OCI-LY7 (cell line): ENCODE measurements at regions of chr1 and their contacts with region 1.

Region 1: GRCh38 chr1:24688621-24689195 is 45.6 kb downstream of the SRRM1 start:
- DNase-seq: peak; percentile 74
- H3K4me3 ChIP-seq: no peak overlapping the region
- H3K27ac ChIP-seq: no peak overlapping the region
- H3K4me1 ChIP-seq: no peaks in the 10 kb centered on the region
- CTCF ChIP-seq: peak; percentile 95

Region 2: GRCh38 chr1:24491577-24492360 is 196.9 kb before region 1 on chr1:
- CTCF ChIA-PET with region 1: no interaction called
- POLR2A ChIA-PET with region 1: no interaction called
- intact Hi-C with region 1: no loop called
- DNase-seq: no peak
- H3K4me3 ChIP-seq: no peak overlapping the region
- H3K27ac ChIP-seq: no peak overlapping the region
- H3K4me1 ChIP-seq: peaks cover 7% of the 10 kb centered on the region
- CTCF ChIP-seq: no peak

Region 3: DNA sequence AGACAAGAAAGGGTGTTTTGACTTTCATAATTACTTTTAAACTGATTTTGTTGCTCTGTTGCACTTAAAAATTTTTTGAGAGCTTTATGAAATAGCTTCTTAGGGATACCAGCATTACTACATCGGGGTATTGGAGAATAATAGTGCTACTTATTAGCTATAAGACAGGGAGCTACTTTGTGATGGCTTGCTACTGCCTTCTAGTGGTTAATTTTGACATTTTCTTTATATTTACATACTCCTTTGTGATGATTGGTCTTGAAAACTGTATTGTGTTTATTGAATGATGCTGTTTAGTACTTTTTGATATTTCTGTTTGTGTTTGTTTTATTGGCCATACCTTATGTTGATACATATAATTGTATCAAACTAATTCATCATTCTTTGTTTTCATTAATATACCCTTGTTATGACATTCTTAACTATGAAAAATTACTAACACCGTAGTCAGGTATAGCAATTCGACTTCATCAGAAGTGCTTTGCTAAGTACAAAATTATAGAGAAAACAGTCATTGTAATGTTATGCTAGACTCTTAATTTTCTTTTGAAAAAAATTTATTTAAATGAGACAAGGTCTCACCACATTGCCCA is 142.1 kb after region 1 on chr1:
- CTCF ChIA-PET with region 1: interaction called, 15 read pairs
- POLR2A ChIA-PET with region 1: interaction called, 10 read pairs
- intact Hi-C with region 1: loop called (anchors 2 kb)
- DNase-seq: peak; percentile 69
- H3K4me3 ChIP-seq: no peak overlapping the region
- H3K27ac ChIP-seq: no peak overlapping the region
- H3K4me1 ChIP-seq: peaks cover 39% of the 10 kb centered on the region
- CTCF ChIP-seq: peak; percentile 99

Region 4: GRCh38 chr1:24849672-24850295 is 161.1 kb after region 1 on chr1:
- CTCF ChIA-PET with region 1: no interaction called
- POLR2A ChIA-PET with region 1: no interaction called
- intact Hi-C with region 1: no loop called
- DNase-seq: peak; percentile 40
- H3K4me3 ChIP-seq: no peak overlapping the region
- H3K27ac ChIP-seq: no peak overlapping the region
- H3K4me1 ChIP-seq: peaks cover 19% of the 10 kb centered on the region
- CTCF ChIP-seq: peak; percentile 57; the same call in 1 of the 2 replicates

Region 5: DNA sequence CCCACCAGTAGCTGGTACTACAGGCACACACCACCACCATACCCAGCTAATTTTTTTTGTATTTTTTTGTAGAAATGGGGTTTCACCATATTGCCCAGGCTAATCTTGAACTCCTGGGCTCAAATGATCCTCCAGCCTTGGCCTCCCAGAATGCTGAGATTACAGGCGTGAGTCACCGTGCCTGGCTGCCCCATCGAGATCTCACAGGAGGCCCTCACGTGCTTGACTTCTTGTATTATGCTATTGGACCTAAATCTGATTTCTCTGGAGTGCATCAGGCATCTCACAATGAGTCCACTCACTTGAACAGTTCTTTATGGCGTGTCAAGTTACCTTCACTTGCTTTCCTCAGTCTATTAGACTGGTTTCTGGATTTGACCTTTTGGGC is 567.9 kb after region 1 on chr1:
- CTCF ChIA-PET with region 1: no interaction called
- POLR2A ChIA-PET with region 1: no interaction called
- intact Hi-C with region 1: no loop called
- DNase-seq: no peak
- H3K4me3 ChIP-seq: no peak overlapping the region
- H3K27ac ChIP-seq: no peak overlapping the region
- H3K4me1 ChIP-seq: peaks cover 7% of the 10 kb centered on the region
- CTCF ChIP-seq: no peak